Activated naive CD4-positive, alpha-beta T cell treated with anti-CD3 and anti-CD28 coated beads for 36 hours (primary cell): ENCODE measurements at regions of chr19 and their contacts with region 1.

Region 1: DNA sequence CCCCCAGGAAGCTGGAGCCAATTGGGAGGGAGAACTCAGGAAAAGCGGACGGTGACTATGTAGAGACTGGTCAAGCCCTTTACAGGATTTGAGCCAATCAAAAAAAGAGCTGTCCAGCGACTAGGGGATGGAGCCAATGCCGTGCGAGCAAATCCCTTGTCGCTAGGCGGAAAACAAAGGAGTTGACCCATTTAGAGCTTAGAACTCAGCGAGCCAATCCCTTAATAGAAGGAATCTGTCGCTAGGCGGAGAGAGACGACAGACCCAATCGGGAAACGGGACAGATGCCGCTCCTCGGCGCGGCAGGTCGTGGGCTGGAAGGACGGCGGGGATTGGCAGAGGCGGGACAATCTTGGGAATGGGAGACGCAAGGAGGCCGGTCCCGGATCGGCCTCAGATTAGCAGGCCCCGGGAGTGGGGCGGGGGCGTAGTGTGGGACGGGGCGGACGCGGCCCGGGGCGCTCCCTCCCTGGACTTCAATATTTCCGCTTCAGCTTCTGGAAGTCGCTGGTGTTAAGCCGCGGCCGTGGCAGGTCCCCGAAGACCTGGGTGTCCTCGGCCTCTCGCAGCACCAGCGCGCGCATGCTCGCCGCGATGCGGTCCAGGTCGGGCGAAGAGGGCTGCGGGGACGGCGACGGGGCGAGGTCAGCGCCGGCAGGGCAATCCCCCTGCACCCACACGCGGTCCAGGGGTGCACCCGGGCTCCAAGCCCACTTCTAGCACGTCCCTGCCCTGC is 2.2 kb upstream of the PNKP start:
- DNase-seq: peak; percentile 95
- H3K4me3 Mint-ChIP-seq: no peak overlapping the region
- H3K27ac Mint-ChIP-seq: no peak overlapping the region
- H3K4me1 Mint-ChIP-seq: peaks cover 47% of the 10 kb centered on the region
- H3K27me3 Mint-ChIP-seq: no peaks in the 10 kb centered on the region

Region 2: DNA sequence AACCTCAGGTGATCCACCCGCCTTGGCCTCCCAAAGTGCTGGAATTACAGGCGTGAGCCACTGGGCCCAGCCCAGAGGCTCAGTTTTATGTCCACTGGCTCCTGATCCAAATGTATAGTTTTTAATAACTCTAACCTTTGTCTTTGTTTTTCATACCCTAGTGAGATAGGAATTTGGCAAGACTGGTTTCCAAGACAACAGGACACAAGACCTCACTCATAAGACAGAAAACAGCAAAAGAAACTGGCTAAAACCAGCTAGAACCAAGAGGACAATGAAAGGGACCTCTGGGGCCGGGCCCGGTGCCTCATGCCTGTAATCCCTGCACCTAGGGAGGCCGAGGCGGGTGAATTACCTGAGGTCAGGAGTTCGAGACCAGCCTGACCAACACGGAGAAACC is 151.1 kb before region 1 on chr19:
- CTCF ChIA-PET with region 1: interaction called, 3 read pairs
- intact Hi-C with region 1: loop called (anchors 5 kb)
- DNase-seq: no peak
- H3K4me3 Mint-ChIP-seq: peak overlapping the region; percentile 46
- H3K27ac Mint-ChIP-seq: no peak overlapping the region
- H3K4me1 Mint-ChIP-seq: peaks cover 16% of the 10 kb centered on the region
- H3K27me3 Mint-ChIP-seq: no peaks in the 10 kb centered on the region

Region 3: GRCh38 chr19:49801966-49802690 is 67.5 kb before region 1 on chr19:
- CTCF ChIA-PET with region 1: no interaction called
- intact Hi-C with region 1: no loop called
- DNase-seq: no peak
- H3K4me3 Mint-ChIP-seq: no peak overlapping the region
- H3K27ac Mint-ChIP-seq: no peak overlapping the region
- H3K4me1 Mint-ChIP-seq: no peaks in the 10 kb centered on the region
- H3K27me3 Mint-ChIP-seq: no peaks in the 10 kb centered on the region

Region 4: GRCh38 chr19:49817964-49818648 is 51.5 kb before region 1 on chr19 and contains the start of gene MED25:
- CTCF ChIA-PET with region 1: no interaction called
- intact Hi-C with region 1: loop called (anchors 1 kb)
- DNase-seq: peak; percentile 87
- H3K4me3 Mint-ChIP-seq: peak within 1 kb of the TSS; percentile 92
- H3K27ac Mint-ChIP-seq: peak within 1 kb of the TSS; percentile 99
- H3K4me1 Mint-ChIP-seq: peaks cover 16% of the 10 kb centered on the region
- H3K27me3 Mint-ChIP-seq: no peaks in the 10 kb centered on the region
- total RNA-seq, gene MED25: 32.4 to 39.2 TPM

Region 5: GRCh38 chr19:49850473-49851342 is 18.9 kb before region 1 on chr19 and contains the start of gene PTOV1:
- CTCF ChIA-PET with region 1: interaction called, 6 read pairs
- intact Hi-C with region 1: loop called (anchors 1 kb)
- DNase-seq: peak; percentile 91
- H3K4me3 Mint-ChIP-seq: peak within 1 kb of the TSS; percentile 87
- H3K27ac Mint-ChIP-seq: peak within 1 kb of the TSS; percentile 95
- H3K4me1 Mint-ChIP-seq: peaks cover 42% of the 10 kb centered on the region
- H3K27me3 Mint-ChIP-seq: no peaks in the 10 kb centered on the region
- total RNA-seq, gene PTOV1: 66.0 to 68.0 TPM

Region 6: GRCh38 chr19:49896863-49897621 is 27.4 kb after region 1 on chr19 and contains the start of gene IL4I1:
- CTCF ChIA-PET with region 1: no interaction called
- intact Hi-C with region 1: loop called (anchors 2 kb)
- DNase-seq: peak; percentile 85
- H3K4me3 Mint-ChIP-seq: peak within 1 kb of the TSS; percentile 67
- H3K27ac Mint-ChIP-seq: peak within 1 kb of the TSS; percentile 97
- H3K4me1 Mint-ChIP-seq: peaks cover 31% of the 10 kb centered on the region
- H3K27me3 Mint-ChIP-seq: no peaks in the 10 kb centered on the region
- total RNA-seq, gene IL4I1: 7.2 to 7.5 TPM

Region 7: DNA sequence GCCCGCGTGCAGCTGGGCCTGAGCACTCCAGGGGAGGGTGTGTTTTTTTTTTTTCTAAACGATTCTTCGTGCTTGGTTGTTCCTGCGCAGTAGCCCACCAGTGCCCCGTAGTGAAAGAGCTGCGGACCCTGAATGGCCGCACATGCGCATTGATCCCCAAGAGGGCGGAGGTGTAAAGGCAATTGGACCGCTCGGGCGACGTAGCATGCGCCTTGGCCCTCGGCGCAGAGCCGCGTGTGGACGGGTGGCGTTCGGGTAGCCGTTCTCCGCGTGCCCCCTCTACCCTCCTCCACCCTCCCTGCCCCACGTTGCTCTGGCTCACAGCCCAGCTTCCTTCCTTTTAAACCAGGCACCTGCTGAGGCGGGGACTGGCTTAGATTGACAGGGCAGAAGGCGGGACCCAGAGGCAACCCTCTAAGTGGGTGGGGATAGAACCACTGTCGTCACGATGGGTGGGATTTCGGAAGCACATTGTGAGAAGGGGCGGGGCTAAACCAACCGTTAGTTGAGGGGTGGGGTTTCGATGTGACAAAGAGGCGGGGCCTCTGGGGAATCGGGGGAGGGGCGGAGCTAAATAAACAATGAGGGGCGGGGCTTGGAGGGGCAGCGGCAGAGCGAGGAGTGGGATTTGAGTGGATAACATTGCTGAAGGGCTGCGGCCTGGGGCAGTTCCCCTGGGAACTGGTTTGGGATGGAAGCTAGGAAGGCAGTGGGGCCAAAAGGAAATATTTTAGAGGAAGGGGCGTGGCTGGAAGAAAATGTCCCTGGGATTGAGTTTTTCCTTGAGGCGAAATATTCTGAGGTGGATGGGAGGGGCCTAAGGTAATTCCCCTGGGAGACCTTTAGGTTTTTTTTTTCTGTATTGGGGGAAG is 60.2 kb after region 1 on chr19:
- CTCF ChIA-PET with region 1: no interaction called
- intact Hi-C with region 1: loop called (anchors 1 kb)
- DNase-seq: peak; percentile 97
- H3K4me3 Mint-ChIP-seq: peak overlapping the region; percentile 89
- H3K27ac Mint-ChIP-seq: peak overlapping the region; percentile 100
- H3K4me1 Mint-ChIP-seq: peaks cover 60% of the 10 kb centered on the region
- H3K27me3 Mint-ChIP-seq: no peaks in the 10 kb centered on the region

Region 8: GRCh38 chr19:49983645-49984229 is 114.1 kb after region 1 on chr19:
- CTCF ChIA-PET with region 1: no interaction called
- intact Hi-C with region 1: loop called (anchors 10 kb)
- DNase-seq: peak; percentile 90
- H3K4me3 Mint-ChIP-seq: no peak overlapping the region
- H3K27ac Mint-ChIP-seq: no peak overlapping the region
- H3K4me1 Mint-ChIP-seq: peaks cover 9% of the 10 kb centered on the region
- H3K27me3 Mint-ChIP-seq: no peaks in the 10 kb centered on the region